CD8-positive, alpha-beta T cell (primary cell): ENCODE measurements at regions of chr13 and their contacts with region 1.

Region 1: GRCh38 chr13:86567119-86567518 is 767.9 kb upstream of the SLITRK6 start:
- DNase-seq: no peak
- ATAC-seq: no peak
- H3K4me3 ChIP-seq: no peak overlapping the region
- H3K4me3 Mint-ChIP-seq: no peak overlapping the region
- H3K27ac ChIP-seq: no peak overlapping the region
- H3K27ac Mint-ChIP-seq: no peak overlapping the region
- H3K4me1 ChIP-seq: no peaks in the 10 kb centered on the region
- H3K4me1 Mint-ChIP-seq: no peaks in the 10 kb centered on the region
- H3K27me3 ChIP-seq: no peaks in the 10 kb centered on the region
- H3K27me3 Mint-ChIP-seq: no peaks in the 10 kb centered on the region
- CTCF ChIP-seq: no peak

Region 2: GRCh38 chr13:86795858-86796257 is 228.7 kb after region 1 on chr13:
- CTCF ChIA-PET with region 1: no interaction called
- POLR2A ChIA-PET with region 1: no interaction called
- intact Hi-C with region 1: no loop called
- DNase-seq: no peak
- ATAC-seq: no peak
- H3K4me3 ChIP-seq: no peak overlapping the region
- H3K4me3 Mint-ChIP-seq: no peak overlapping the region
- H3K27ac ChIP-seq: no peak overlapping the region
- H3K27ac Mint-ChIP-seq: no peak overlapping the region
- H3K4me1 ChIP-seq: no peaks in the 10 kb centered on the region
- H3K4me1 Mint-ChIP-seq: no peaks in the 10 kb centered on the region
- H3K27me3 ChIP-seq: no peaks in the 10 kb centered on the region
- H3K27me3 Mint-ChIP-seq: no peaks in the 10 kb centered on the region
- CTCF ChIP-seq: no peak

Region 3: GRCh38 chr13:87684850-87685735 is 1118.0 kb after region 1 on chr13:
- CTCF ChIA-PET with region 1: no interaction called
- POLR2A ChIA-PET with region 1: no interaction called
- intact Hi-C with region 1: loop called in 1 of 2 experiments (anchors 5 kb)
- DNase-seq: no peak
- ATAC-seq: no peak
- H3K4me3 ChIP-seq: no peak overlapping the region
- H3K4me3 Mint-ChIP-seq: no peak overlapping the region
- H3K27ac ChIP-seq: no peak overlapping the region
- H3K27ac Mint-ChIP-seq: no peak overlapping the region
- H3K4me1 ChIP-seq: no peaks in the 10 kb centered on the region
- H3K4me1 Mint-ChIP-seq: no peaks in the 10 kb centered on the region
- H3K27me3 ChIP-seq: no peaks in the 10 kb centered on the region
- H3K27me3 Mint-ChIP-seq: peaks cover 2% of the 10 kb centered on the region
- CTCF ChIP-seq: no peak